ENCODE measurements at regions of chr12 and their contacts with region 1.

Region 1: DNA sequence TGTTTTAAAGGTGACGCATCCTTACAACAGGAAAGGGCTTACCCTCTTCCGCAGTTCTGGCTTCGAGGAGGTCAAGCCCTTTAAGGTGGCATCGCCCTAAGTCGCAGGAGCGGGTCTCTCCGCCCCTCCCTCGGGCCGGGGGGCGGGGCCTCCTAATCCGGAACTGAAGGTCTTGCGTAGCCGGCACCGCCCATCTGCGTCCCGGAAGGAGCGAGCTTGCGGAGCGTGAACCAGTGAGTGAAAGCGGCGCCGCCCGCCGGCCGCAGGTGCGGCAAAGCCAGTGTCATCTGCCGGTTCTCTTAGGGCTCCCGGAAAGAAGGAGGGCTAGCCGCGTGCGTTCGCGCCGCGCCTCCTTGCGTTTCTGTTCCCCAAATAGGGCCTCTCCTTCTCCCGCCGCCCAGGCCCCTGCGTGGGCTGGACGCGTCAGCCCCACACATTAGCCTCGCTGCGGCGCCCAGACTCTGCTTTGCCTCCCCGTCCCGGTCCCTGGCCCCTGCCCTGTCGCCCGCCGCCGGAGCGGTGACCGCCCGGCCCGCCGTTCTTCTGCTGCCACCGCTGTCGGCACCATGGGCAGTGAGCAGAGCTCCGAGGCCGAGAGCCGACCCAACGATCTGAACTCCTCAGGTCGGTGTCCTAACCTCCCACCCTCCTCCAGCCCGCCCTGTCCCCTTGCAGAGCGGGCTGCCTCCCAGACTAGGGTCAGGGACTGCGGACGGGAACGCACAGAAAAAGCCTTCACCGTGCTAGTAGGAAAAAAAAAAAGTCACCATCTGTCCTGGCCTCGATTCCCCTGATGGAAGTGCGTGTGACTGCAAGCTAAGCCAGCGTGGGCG is at the start of gene BORCS5:
- DNase-seq: peak; percentile 94 to 99 (median 97)
- ATAC-seq: peak; percentile 96
- H3K4me3 ChIP-seq: peak within 1 kb of the TSS; percentile 85
- H3K4me3 Mint-ChIP-seq: peak within 1 kb of the TSS; percentile 90 to 99 (median 96)
- H3K27ac ChIP-seq: peak within 1 kb of the TSS; percentile 99
- H3K27ac Mint-ChIP-seq: peak within 1 kb of the TSS; percentile 92 to 99 (median 98)
- H3K4me1 ChIP-seq: peaks cover 14 to 28% of the 10 kb centered on the region in 2 donors
- H3K4me1 Mint-ChIP-seq: peaks cover 31 to 74% (median 64%) of the 10 kb centered on the region in 7 donors
- H3K27me3 ChIP-seq: no peaks in the 10 kb centered on the region
- H3K27me3 Mint-ChIP-seq: no peaks in the 10 kb centered on the region
- total RNA-seq, gene BORCS5: 15.3 to 28.2 (median 22.1) TPM

Region 2: GRCh38 chr12:12266873-12267741 is 90.0 kb before region 1 on chr12 and contains the start of gene LRP6:
- CTCF ChIA-PET with region 1: interaction called, 6 read pairs
- POLR2A ChIA-PET with region 1: interaction called, 9 read pairs
- intact Hi-C with region 1: loop called in 1 of 2 experiments (anchors 2 kb)
- DNase-seq: peak; percentile 57 to 83 (median 75)
- ATAC-seq: peak; percentile 91
- H3K4me3 ChIP-seq: peak within 1 kb of the TSS; percentile 86
- H3K4me3 Mint-ChIP-seq: peak within 1 kb of the TSS; percentile 79 to 93 (median 88)
- H3K27ac ChIP-seq: peak within 1 kb of the TSS; percentile 68
- H3K27ac Mint-ChIP-seq: peak within 1 kb of the TSS; percentile 29 to 88 (median 73)
- H3K4me1 ChIP-seq: peaks cover 8 to 10% of the 10 kb centered on the region in 2 donors
- H3K4me1 Mint-ChIP-seq: peaks cover 14 to 40% (median 31%) of the 10 kb centered on the region in 7 donors
- H3K27me3 ChIP-seq: peaks cover 0 to 10% of the 10 kb centered on the region in 2 donors
- H3K27me3 Mint-ChIP-seq: peaks cover 0 to 53% (median 14%) of the 10 kb centered on the region in 5 donors
- total RNA-seq, gene LRP6: 1.6 to 12.6 (median 7.4) TPM

Region 3: DNA sequence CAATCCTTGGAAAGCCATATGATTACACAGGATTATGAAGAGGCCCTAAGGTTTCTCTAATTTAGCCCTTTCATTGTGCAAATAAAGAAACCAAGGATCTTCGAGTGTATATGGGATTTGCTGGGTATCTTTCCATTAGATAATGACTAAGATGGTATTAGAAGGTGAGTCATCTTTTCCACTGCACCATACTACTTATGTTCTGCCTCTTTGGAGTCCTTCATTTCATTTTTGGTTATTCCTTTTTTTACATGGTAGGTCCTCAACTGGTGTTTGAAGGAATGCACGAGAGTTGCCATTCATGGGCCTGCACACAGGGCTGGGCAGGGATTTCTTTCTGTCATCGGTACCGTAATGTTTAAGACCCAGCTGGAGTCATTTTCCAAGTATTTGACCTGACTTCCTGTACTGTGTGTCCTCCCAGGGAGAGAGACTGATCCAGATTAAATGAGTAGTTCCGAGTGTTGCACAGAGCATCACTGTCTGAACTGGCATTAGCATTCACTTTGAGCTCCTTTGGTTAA is 85.5 kb after region 1 on chr12:
- CTCF ChIA-PET with region 1: interaction called, 3 read pairs
- POLR2A ChIA-PET with region 1: interaction called, 18 read pairs
- intact Hi-C with region 1: no loop called
- DNase-seq: peak in 1 of 9 donors; percentile 32
- ATAC-seq: no peak
- H3K4me3 ChIP-seq: no peak overlapping the region
- H3K4me3 Mint-ChIP-seq: peak overlapping the region in 9 of 10 donors; percentile 9 to 78 (median 56)
- H3K27ac ChIP-seq: peak overlapping the region; percentile 61
- H3K27ac Mint-ChIP-seq: peak overlapping the region; percentile 92 to 99 (median 97)
- H3K4me1 ChIP-seq: peaks cover 52 to 54% of the 10 kb centered on the region in 2 donors
- H3K4me1 Mint-ChIP-seq: peaks cover 39 to 72% (median 66%) of the 10 kb centered on the region in 7 donors
- H3K27me3 ChIP-seq: no peaks in the 10 kb centered on the region
- H3K27me3 Mint-ChIP-seq: no peaks in the 10 kb centered on the region

Region 4: DNA sequence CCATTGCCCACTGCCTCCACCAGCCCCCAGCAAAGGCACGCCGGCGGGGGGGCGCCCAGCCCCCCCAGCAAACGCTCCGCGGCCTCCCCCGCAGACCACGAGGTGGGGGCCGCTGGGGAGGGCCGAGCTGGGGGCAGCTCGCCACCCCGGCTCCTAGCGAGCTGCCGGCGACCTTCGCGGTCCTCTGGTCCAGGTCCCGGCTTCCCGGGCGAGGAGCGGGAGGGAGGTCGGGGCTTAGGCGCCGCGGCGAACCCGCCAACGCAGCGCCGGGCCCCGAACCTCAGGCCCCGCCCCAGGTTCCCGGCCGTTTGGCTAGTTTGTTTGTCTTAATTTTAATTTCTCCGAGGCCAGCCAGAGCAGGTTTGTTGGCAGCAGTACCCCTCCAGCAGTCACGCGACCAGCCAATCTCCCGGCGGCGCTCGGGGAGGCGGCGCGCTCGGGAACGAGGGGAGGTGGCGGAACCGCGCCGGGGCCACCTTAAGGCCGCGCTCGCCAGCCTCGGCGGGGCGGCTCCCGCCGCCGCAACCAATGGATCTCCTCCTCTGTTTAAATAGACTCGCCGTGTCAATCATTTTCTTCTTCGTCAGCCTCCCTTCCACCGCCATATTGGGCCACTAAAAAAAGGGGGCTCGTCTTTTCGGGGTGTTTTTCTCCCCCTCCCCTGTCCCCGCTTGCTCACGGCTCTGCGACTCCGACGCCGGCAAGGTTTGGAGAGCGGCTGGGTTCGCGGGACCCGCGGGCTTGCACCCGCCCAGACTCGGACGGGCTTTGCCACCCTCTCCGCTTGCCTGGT is 359.9 kb after region 1 on chr12 and contains the start of gene CDKN1B:
- CTCF ChIA-PET with region 1: interaction called, 5 read pairs
- POLR2A ChIA-PET with region 1: interaction called, 88 read pairs
- intact Hi-C with region 1: loop called (anchors 1 kb)
- DNase-seq: peak; percentile 68 to 91 (median 87)
- ATAC-seq: peak; percentile 77
- H3K4me3 ChIP-seq: peak within 1 kb of the TSS; percentile 94
- H3K4me3 Mint-ChIP-seq: peak within 1 kb of the TSS; percentile 87 to 100 (median 98)
- H3K27ac ChIP-seq: peak within 1 kb of the TSS; percentile 99
- H3K27ac Mint-ChIP-seq: peak within 1 kb of the TSS; percentile 97 to 99 (median 99)
- H3K4me1 ChIP-seq: peaks cover 24 to 39% of the 10 kb centered on the region in 2 donors
- H3K4me1 Mint-ChIP-seq: peaks cover 43 to 66% (median 55%) of the 10 kb centered on the region in 7 donors
- H3K27me3 ChIP-seq: no peaks in the 10 kb centered on the region
- H3K27me3 Mint-ChIP-seq: no peaks in the 10 kb centered on the region
- total RNA-seq, gene CDKN1B: 105 to 205 (median 191) TPM

Region 5: GRCh38 chr12:12803186-12803585 is 446.1 kb after region 1 on chr12:
- CTCF ChIA-PET with region 1: no interaction called
- POLR2A ChIA-PET with region 1: interaction called, 7 read pairs
- intact Hi-C with region 1: loop called in 1 of 2 experiments (anchors 1 kb)
- DNase-seq: peak in 3 of 9 donors; percentile 11 to 46 (median 35)
- ATAC-seq: peak; percentile 28
- H3K4me3 ChIP-seq: no peak overlapping the region
- H3K4me3 Mint-ChIP-seq: peak overlapping the region in 3 of 10 donors; percentile 31 to 77 (median 31)
- H3K27ac ChIP-seq: no peak overlapping the region
- H3K27ac Mint-ChIP-seq: peak overlapping the region; percentile 16 to 98 (median 73)
- H3K4me1 ChIP-seq: peaks cover 13 to 17% of the 10 kb centered on the region in 2 donors
- H3K4me1 Mint-ChIP-seq: peaks cover 25 to 64% (median 55%) of the 10 kb centered on the region in 7 donors
- H3K27me3 ChIP-seq: no peaks in the 10 kb centered on the region
- H3K27me3 Mint-ChIP-seq: no peaks in the 10 kb centered on the region